Cardiac septum (tissue), 1 donor: ENCODE measurements at regions of chr2 and their contacts with region 1.

Region 1: GRCh38 chr2:9843229-9844035 is at the start of gene TAF1B:
- DNase-seq: peak; percentile 93
- total RNA-seq, gene TAF1B: 8.4 TPM

Region 2: GRCh38 chr2:9984217-9984739 is 140.8 kb after region 1 on chr2:
- intact Hi-C with region 1: loop called (anchors 5 kb)
- DNase-seq: peak; percentile 63